Tibial artery (tissue), 4 donors: ENCODE measurements at regions of chr13 and their contacts with region 1.

Region 1: GRCh38 chr13:26502826-26503225 is 54.7 kb upstream of the WASF3 start:
- DNase-seq: peak in 1 of 2 donors; percentile 75
- H3K4me3 ChIP-seq: no peak overlapping the region
- H3K27ac ChIP-seq: no peak overlapping the region
- H3K4me1 ChIP-seq: no peaks in the 10 kb centered on the region
- H3K27me3 ChIP-seq: peaks cover 0 to 16% of the 10 kb centered on the region in 2 donors
- CTCF ChIP-seq: no peak

Region 2: DNA sequence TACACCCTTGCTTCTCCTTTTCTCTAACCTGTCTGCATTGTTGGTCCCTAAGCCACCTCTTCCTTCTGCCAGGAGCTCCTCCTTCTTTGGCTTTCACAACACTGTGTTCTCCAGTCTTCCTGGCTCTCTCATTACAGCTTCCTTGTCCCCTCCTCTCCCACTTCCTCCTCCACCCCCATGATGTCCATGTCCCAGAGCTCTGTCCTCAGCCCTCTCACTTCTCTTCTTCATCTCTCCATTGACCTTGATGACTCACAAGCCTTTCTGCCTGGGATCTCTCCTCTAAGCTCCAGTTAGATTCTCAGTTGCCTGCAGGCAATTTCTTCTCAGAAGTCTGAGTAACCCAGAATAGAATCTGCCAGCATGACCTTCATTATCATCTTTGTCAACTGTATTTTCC is 45.6 kb before region 1 on chr13:
- intact Hi-C with region 1: loop called (anchors 2 kb)
- DNase-seq: no peak
- H3K4me3 ChIP-seq: no peak overlapping the region
- H3K27ac ChIP-seq: no peak overlapping the region
- H3K4me1 ChIP-seq: peaks cover 0 to 17% (median 5%) of the 10 kb centered on the region in 4 donors
- H3K27me3 ChIP-seq: no peaks in the 10 kb centered on the region
- CTCF ChIP-seq: no peak

Region 3: GRCh38 chr13:26557393-26558023 is 54.7 kb after region 1 on chr13 and contains the start of gene WASF3:
- intact Hi-C with region 1: no loop called
- DNase-seq: peak; percentile 90 to 96
- H3K4me3 ChIP-seq: peak within 1 kb of the TSS; percentile 60 to 86
- H3K27ac ChIP-seq: peak within 1 kb of the TSS; percentile 69 to 73
- H3K4me1 ChIP-seq: peaks cover 0 to 37% (median 22%) of the 10 kb centered on the region in 4 donors
- H3K27me3 ChIP-seq: no peaks in the 10 kb centered on the region
- CTCF ChIP-seq: no peak

Region 4: GRCh38 chr13:26785838-26786630 is 283.2 kb after region 1 on chr13:
- intact Hi-C with region 1: no loop called
- DNase-seq: peak in 1 of 2 donors; percentile 37
- H3K4me3 ChIP-seq: no peak overlapping the region
- H3K27ac ChIP-seq: no peak overlapping the region
- H3K4me1 ChIP-seq: no peaks in the 10 kb centered on the region
- H3K27me3 ChIP-seq: peaks cover 0 to 17% of the 10 kb centered on the region in 2 donors
- CTCF ChIP-seq: no peak